Posterior vena cava (tissue), 2 donors: ENCODE measurements at regions of chr13 and their contacts with region 1.

Region 1: GRCh38 chr13:83672612-83673011 is 209.7 kb downstream of the SLITRK1 start:
- DNase-seq: no peak

Region 2: GRCh38 chr13:83515268-83516015 is 157.2 kb before region 1 on chr13:
- intact Hi-C with region 1: loop called in 1 of 2 experiments (anchors 2 kb)
- DNase-seq: no peak